ENCODE measurements at regions of chr15 and their contacts with region 1.

Region 1: DNA sequence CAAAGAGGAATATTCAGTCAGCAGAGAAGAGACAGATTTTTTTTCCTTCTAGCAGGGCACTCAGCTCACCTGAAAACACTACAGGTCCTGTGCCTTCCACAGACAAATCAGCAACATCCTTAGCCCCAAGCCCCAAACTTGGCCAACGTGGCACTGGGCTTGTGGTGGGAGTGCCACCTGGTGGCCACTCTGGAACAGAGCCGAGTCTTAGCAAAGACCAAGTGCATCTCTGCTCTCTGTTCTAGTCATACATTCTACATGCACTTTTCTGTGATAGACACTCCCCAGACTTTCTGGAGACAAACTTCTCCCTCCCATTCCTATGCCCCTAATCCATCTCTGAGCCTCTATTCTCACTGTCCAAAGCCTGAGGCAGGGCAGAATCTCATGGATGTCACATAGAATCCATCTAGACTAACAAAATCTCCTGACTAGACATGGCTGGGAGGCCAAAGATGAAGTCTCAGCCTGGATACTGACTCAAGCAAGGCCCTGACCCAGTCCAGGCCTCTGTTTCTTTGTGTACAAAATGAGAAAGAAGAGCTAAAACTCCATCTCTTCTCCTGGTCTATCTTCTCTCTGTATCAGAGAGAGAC is 5.1 kb upstream of the SEMA7A start:
- H3K4me3 Mint-ChIP-seq: no peak overlapping the region
- H3K27ac Mint-ChIP-seq: no peak overlapping the region
- H3K4me1 Mint-ChIP-seq: peaks cover 25% of the 10 kb centered on the region
- H3K27me3 Mint-ChIP-seq: peaks cover 11% of the 10 kb centered on the region

Region 2: DNA sequence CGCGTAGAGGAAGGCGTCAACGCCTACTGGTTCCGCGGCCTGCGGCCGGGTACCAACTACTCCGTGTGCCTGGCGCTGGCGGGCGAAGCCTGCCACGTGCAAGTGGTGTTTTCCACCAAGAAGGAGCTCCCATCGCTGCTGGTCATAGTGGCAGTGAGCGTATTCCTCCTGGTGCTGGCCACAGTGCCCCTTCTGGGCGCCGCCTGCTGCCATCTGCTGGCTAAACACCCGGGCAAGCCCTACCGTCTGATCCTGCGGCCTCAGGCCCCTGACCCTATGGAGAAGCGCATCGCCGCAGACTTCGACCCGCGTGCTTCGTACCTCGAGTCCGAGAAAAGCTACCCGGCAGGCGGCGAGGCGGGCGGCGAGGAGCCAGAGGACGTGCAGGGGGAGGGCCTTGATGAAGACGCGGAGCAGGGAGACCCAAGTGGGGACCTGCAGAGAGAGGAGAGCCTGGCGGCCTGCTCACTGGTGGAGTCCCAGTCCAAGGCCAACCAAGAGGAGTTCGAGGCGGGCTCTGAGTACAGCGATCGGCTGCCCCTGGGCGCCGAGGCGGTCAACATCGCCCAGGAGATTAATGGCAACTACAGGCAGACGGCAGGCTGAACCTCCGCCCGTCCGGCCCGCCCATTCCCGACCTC is 304.3 kb before region 1 on chr15:
- intact Hi-C with region 1: no loop called
- H3K4me3 Mint-ChIP-seq: no peak overlapping the region
- H3K27ac Mint-ChIP-seq: no peak overlapping the region
- H3K4me1 Mint-ChIP-seq: peaks cover 25% of the 10 kb centered on the region
- H3K27me3 Mint-ChIP-seq: peaks cover 94% of the 10 kb centered on the region

Region 3: GRCh38 chr15:74382004-74382816 is 56.6 kb before region 1 on chr15:
- intact Hi-C with region 1: loop called (anchors 1 kb)
- H3K4me3 Mint-ChIP-seq: no peak overlapping the region
- H3K27ac Mint-ChIP-seq: no peak overlapping the region
- H3K4me1 Mint-ChIP-seq: peaks cover 23% of the 10 kb centered on the region
- H3K27me3 Mint-ChIP-seq: peaks cover 40% of the 10 kb centered on the region

Measured in dendritic cell treated with granulocyte-macrophage colony-stimulating factor and Interleukin-4, amounts not matched to agents 40 ng/mL and 50 ng/mL, for 4 days (primary cell).